ENCODE measurements at regions of chr11 and their contacts with region 1.

Region 1: GRCh38 chr11:43393765-43394355 is 35.1 kb downstream of the TTC17 start:
- DNase-seq: no peak
- H3K4me3 ChIP-seq: no peak overlapping the region
- H3K4me3 Mint-ChIP-seq: no peak overlapping the region
- H3K27ac ChIP-seq: no peak overlapping the region
- H3K27ac Mint-ChIP-seq: peak overlapping the region in 2 of 7 donors; percentile 8 to 19
- H3K4me1 ChIP-seq: no peaks in the 10 kb centered on the region
- H3K4me1 Mint-ChIP-seq: no peaks in the 10 kb centered on the region
- H3K27me3 ChIP-seq: no peaks in the 10 kb centered on the region
- H3K27me3 Mint-ChIP-seq: no peaks in the 10 kb centered on the region
- CTCF ChIP-seq: no peak

Region 2: DNA sequence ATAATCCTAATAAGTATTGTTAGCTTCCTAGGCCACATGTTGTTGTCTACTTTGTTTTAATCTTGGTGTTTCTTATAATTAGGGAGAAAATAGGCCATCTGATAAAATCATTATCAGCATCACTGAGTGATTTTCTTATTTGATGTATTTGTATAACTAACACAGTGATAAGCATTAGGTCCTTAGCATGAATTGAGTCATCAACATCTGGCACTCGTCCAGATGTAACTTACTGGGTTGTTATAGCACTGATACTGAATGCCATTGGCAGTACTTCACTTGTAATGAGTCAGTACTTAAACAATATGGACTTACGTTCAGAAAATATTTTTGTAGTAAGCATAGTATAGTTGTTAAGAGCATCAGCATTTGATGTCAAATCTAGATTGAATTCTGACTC is 65.9 kb before region 1 on chr11:
- intact Hi-C with region 1: loop called in 1 of 2 experiments (anchors 10 kb)
- DNase-seq: no peak
- H3K4me3 ChIP-seq: no peak overlapping the region
- H3K4me3 Mint-ChIP-seq: no peak overlapping the region
- H3K27ac ChIP-seq: no peak overlapping the region
- H3K27ac Mint-ChIP-seq: no peak overlapping the region
- H3K4me1 ChIP-seq: no peaks in the 10 kb centered on the region
- H3K4me1 Mint-ChIP-seq: no peaks in the 10 kb centered on the region
- H3K27me3 ChIP-seq: no peaks in the 10 kb centered on the region
- H3K27me3 Mint-ChIP-seq: no peaks in the 10 kb centered on the region
- CTCF ChIP-seq: no peak

Region 3: GRCh38 chr11:44269369-44270351 is 875.8 kb after region 1 on chr11:
- intact Hi-C with region 1: no loop called
- DNase-seq: no peak
- H3K4me3 ChIP-seq: no peak overlapping the region
- H3K4me3 Mint-ChIP-seq: no peak overlapping the region
- H3K27ac ChIP-seq: no peak overlapping the region
- H3K27ac Mint-ChIP-seq: no peak overlapping the region
- H3K4me1 ChIP-seq: no peaks in the 10 kb centered on the region
- H3K4me1 Mint-ChIP-seq: no peaks in the 10 kb centered on the region
- H3K27me3 ChIP-seq: no peaks in the 10 kb centered on the region
- H3K27me3 Mint-ChIP-seq: peaks cover 0 to 3% (median 2%) of the 10 kb centered on the region in 3 donors
- CTCF ChIP-seq: no peak